Mucosa of descending colon (tissue), 3 donors: ENCODE measurements at regions of chr7 and their contacts with region 1.

Region 1: DNA sequence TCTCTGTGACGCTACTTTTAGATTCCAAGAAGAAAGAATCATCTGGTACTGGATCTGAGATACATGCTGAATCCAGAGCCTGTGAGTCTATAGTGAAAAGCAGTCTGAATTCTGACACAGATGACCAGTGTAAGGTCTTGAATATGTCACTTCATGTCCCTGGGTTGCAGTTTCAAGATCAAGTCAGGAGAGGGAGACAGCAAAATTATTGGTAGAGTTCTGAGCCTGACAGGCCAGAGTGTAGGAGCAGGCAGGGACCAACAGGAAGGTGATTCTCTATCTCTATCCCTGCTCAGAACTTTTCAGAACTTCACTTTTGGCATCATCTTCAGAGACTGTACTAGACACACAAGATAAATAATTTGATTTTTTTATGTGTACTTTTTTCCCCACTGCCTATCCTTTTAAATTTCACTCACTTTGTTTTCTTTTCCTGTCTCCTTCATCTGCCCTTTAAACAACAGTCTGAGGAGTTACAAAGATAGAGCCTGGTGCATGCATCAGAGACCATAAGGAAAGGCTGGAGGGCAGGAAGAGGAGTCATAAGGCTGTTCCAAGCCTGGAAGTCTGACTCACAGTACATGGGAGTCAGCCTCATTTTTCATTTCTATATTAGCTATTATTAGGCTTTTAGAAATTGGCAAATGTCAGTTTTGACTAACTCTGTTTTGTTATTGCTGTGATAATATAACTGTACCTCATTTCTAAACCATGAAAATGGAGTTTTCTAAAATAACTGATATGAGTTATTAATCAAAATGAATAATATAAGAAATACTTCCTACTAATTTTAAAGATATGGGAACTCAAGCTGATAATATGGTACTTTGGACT is 120.2 kb upstream of the TMEM229A start:
- DNase-seq: peak in 1 of 3 donors; percentile 29
- ATAC-seq: peak; percentile 61
- H3K4me3 ChIP-seq: no peak overlapping the region
- H3K4me1 ChIP-seq: no peaks in the 10 kb centered on the region
- CTCF ChIP-seq: no peak

Region 2: GRCh38 chr7:123712619-123713018 is 440.5 kb before region 1 on chr7:
- intact Hi-C with region 1: no loop called
- DNase-seq: no peak
- ATAC-seq: no peak
- H3K4me3 ChIP-seq: no peak overlapping the region
- H3K4me1 ChIP-seq: peaks cover 18% of the 10 kb centered on the region
- CTCF ChIP-seq: no peak

Region 3: DNA sequence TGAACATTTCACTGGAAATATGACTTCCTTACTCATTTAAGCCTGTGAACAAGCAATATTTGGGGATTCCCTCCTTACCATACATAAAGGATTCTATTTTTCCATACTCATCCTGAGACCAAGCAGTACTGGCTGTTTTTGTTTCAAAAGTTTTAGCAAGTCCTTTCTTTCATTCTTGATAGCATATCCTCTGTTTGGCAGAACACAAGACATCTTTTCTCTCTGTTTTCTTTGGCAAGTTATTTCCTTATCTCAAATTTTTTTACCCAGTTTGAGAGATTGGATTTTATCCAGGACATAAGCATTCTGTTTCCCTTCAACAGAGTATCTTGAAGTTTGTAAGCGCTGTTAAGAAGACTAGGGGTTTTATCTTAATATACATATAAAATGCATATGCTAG is 401.3 kb before region 1 on chr7:
- intact Hi-C with region 1: no loop called
- DNase-seq: no peak
- ATAC-seq: no peak
- H3K4me3 ChIP-seq: no peak overlapping the region
- H3K4me1 ChIP-seq: peaks cover 16% of the 10 kb centered on the region
- CTCF ChIP-seq: no peak

Region 4: DNA sequence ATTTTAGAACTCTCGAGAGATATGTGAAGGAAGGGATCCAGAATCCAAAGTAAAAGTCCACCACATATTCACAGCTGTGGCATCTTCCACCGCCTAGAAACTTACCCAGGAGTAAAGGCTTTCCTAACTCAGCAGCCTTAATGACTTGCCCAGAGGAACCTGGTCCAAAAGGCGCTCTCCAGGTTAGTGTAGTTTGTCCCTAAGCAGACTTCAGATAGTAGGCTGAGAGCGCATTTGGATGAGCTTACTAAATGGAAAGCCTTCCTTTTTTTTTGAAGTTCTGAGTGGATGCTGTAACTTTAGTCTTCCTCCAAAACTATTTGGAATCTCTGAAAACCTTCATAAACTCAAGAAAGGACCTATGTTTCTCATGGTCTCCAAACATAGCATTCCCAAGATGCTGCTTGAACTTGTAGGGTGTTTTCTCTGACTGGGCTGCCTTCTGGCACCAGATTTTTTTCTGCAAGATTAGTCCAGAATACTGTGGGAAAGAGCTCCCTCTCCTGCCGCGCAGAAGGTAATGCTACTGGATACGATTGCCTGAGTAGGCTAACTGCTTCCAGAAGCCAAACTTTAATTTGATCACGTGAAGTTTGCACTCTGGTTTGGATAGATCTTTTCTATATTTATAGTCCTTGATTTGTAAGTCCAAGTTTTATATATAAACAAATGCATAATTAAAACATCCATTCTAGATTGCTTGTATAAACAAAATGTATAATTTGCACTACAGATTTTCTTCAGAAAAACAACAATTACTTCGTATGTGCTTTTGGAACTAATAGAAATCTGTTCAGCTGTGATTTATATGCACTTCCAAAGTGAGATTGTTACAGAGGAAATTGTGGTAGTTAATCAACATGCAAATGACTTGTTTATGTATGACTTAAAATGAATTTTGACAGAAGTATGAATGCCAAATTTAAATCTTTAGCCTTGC is 632.1 kb after region 1 on chr7:
- intact Hi-C with region 1: loop called in 1 of 2 experiments (anchors 10 kb)
- DNase-seq: peak in 1 of 3 donors; percentile 20
- ATAC-seq: peak; percentile 80
- H3K4me3 ChIP-seq: no peak overlapping the region
- H3K4me1 ChIP-seq: no peaks in the 10 kb centered on the region
- CTCF ChIP-seq: peak; percentile 51